ENCODE measurements at regions of chr16 and their contacts with region 1.

Region 1: GRCh38 chr16:87203060-87203656 is 114.0 kb downstream of the C16orf95 start:
- DNase-seq: peak; percentile 70
- H3K4me3 ChIP-seq: no peak overlapping the region
- H3K27ac ChIP-seq: no peak overlapping the region
- H3K4me1 ChIP-seq: no peaks in the 10 kb centered on the region
- CTCF ChIP-seq: peak; percentile 90

Region 2: DNA sequence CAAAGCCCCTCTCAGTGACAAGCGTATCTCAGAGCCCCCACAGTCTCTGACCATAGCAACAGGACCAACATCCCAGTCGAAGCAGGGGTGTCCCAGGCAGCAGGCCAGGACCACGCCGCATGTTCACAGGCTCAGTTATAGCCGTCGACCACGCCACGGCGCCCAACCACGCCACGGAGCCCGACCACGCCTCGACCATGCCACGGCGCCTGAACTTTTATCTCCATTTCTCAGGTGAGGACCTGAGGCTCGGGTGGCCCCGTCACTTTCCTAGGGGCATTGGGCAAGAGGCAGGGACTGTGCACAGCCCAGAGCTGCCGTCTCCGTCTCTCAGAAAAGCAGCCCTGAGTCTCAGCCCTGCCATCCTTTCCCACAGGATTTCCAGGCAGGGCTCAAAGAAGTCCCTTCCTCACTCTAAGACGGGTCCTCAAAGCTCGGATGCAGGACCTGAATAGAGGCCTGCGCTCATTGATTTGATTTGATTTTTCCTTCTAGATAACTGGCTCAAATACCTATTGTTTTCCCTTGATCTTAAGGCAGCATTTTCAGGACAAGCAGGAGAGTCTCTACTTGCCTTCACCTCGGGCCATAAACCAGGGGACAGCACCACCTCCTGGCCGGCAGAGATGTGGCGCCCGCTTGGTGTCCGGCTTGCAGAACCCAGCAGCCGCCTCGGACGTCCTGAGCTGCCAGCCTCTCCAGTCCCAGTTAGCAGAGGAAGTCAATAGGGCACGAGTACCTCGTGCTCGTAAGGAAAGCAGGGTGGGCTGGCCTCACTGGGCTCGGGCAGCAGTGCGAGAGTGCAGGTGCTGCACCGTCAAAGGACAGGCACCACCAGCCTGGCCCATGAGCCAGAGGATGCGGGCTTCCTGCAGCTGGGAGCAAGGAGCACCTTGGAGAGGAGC is 75.3 kb after region 1 on chr16:
- CTCF ChIA-PET with region 1: no interaction called
- POLR2A ChIA-PET with region 1: no interaction called
- intact Hi-C with region 1: loop called (anchors 2 kb)
- DNase-seq: peak; percentile 59
- H3K4me3 ChIP-seq: no peak overlapping the region
- H3K27ac ChIP-seq: no peak overlapping the region
- H3K4me1 ChIP-seq: no peaks in the 10 kb centered on the region
- CTCF ChIP-seq: peak; percentile 84

Measured in OCI-LY7 (cell line).